Activated CD4-positive, alpha-beta memory T cell treated with anti-CD3 and anti-CD28 coated beads for 36 hours (primary cell): ENCODE measurements at regions of chr1 and their contacts with region 1.

Region 1: DNA sequence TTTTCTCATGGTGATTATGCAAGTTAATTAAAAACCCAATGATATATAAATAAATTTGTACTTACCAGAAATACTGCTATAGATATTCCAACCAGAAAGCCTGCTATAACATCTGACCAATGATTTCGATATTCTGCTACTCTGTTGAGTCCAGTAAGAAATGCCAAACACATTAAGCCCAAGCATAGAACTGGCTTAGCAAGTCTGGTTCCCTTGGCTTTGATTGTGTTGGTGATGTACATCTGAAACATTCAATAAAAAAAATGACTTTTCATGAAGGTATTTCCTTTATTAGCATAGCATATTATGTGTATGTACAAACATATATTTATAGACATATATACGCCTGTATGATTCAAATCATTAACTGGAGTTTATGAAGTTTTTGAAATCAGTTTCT is 82.8 kb downstream of the PLPPR5 start:
- DNase-seq: no peak
- H3K4me3 Mint-ChIP-seq: no peak overlapping the region
- H3K27ac Mint-ChIP-seq: no peak overlapping the region
- H3K4me1 Mint-ChIP-seq: peaks cover 2% of the 10 kb centered on the region
- H3K27me3 Mint-ChIP-seq: no peaks in the 10 kb centered on the region

Region 2: DNA sequence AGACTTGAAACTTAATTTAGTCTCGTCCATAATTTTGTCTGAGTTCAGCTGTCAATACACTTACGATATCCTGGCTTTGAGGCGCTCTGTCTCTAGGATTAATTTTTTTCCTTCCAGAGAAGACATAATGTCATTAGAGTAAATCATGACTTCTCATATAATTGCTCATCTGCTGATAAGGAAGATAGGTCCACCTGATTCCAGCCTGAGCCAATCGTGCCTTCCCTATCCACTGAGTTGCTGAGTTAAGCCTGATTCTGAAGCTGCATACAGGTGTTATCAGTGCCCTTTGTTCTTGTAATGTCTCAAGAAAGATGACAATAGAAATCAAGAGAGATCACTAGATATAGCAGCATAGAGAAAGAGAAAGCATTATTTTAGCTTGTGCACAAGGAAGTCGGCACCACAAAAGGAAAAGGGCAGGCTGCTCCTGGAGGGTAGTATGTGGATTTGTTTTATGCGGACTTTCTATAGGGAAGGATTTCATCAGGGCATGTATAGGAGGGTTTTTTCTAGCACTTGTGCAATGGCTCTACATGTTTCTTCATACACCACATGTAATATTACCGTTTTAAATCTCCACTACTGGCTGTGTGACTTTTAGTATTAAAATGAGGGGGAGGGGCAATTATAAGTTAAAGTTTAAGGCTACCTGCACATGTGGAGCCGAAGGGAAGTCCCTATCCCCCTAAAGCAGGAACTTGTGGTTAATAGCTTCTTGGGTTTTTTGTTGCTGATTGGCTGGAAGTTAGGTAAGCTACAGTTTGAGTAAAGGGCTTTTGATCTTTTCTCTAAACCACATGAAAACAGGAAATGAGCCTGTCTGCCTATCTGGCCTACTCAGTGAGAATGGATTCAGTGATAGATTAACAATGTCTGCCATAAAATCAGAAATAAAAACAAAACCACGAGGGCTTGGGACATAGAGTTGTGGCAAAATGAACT is 50.6 kb before region 1 on chr1:
- CTCF ChIA-PET with region 1: no interaction called
- POLR2A ChIA-PET with region 1: no interaction called
- intact Hi-C with region 1: loop called (anchors 2 kb)
- DNase-seq: peak; percentile 31
- H3K4me3 Mint-ChIP-seq: peak overlapping the region; percentile 65
- H3K27ac Mint-ChIP-seq: peak overlapping the region; percentile 94
- H3K4me1 Mint-ChIP-seq: peaks cover 21% of the 10 kb centered on the region
- H3K27me3 Mint-ChIP-seq: no peaks in the 10 kb centered on the region

Region 3: DNA sequence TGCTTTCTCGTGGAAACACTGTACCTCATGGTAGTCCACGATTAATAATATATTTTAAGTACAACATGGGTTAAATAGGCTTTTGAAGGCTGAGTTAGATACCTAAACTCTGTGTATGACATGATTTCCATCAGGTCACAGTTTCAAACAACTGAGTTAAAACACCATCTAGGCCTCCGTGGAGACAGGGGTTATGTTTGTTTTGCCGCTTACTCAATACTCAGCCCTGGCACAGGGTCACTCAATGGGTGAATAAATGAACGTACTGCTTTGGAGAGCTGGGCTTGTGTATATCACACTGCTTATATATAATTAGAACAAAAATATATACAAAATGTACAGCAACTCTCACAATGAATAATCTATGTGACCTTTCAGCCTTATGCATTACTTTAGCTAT is 10.4 kb after region 1 on chr1:
- CTCF ChIA-PET with region 1: no interaction called
- POLR2A ChIA-PET with region 1: no interaction called
- intact Hi-C with region 1: no loop called
- DNase-seq: no peak
- H3K4me3 Mint-ChIP-seq: no peak overlapping the region
- H3K27ac Mint-ChIP-seq: no peak overlapping the region
- H3K4me1 Mint-ChIP-seq: peaks cover 2% of the 10 kb centered on the region
- H3K27me3 Mint-ChIP-seq: peaks cover 2% of the 10 kb centered on the region

Region 4: GRCh38 chr1:98965394-98965793 is 43.6 kb after region 1 on chr1:
- CTCF ChIA-PET with region 1: no interaction called
- POLR2A ChIA-PET with region 1: no interaction called
- intact Hi-C with region 1: loop called (anchors 1 kb)
- DNase-seq: no peak
- H3K4me3 Mint-ChIP-seq: no peak overlapping the region
- H3K27ac Mint-ChIP-seq: no peak overlapping the region
- H3K4me1 Mint-ChIP-seq: peaks cover 2% of the 10 kb centered on the region
- H3K27me3 Mint-ChIP-seq: peaks cover 2% of the 10 kb centered on the region

Region 5: GRCh38 chr1:99069146-99069545 is 147.3 kb after region 1 on chr1:
- CTCF ChIA-PET with region 1: no interaction called
- POLR2A ChIA-PET with region 1: no interaction called
- intact Hi-C with region 1: no loop called
- DNase-seq: no peak
- H3K4me3 Mint-ChIP-seq: no peak overlapping the region
- H3K27ac Mint-ChIP-seq: no peak overlapping the region
- H3K4me1 Mint-ChIP-seq: no peaks in the 10 kb centered on the region
- H3K27me3 Mint-ChIP-seq: peaks cover 4% of the 10 kb centered on the region